ENCODE measurements at regions of chr18 and their contacts with region 1.

Region 1: DNA sequence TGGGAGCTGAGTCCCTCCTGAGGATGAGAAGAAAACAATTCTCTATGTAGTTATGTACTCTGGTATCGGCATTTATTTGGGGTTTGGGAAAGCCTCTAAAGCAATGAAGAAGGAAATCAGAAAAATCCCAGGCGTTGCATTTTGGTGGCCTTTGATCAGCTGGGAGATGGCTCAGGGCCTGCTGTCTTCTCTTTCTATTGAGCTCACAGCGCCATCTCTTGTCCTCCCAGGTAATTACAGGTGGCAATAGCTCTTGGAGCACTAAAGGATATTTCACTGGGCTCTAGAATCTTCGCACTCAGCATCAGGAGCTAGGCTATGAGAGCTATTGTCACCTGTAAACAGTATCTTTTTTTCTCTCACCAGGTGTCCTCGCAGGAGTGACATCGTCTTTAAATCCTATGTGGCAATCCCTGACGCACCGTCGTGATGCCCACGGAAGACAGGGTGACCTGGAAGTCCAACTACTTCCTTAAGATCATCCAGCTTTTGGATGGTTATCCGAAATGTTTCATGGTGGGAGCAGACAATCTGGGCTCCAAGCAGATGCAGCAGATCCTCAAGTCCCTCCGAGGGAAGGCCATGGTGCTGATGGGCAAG is 76.1 kb upstream of the PMAIP1 start:
- DNase-seq: peak; percentile 67
- H3K4me3 Mint-ChIP-seq: no peak overlapping the region
- H3K27ac Mint-ChIP-seq: no peak overlapping the region
- H3K4me1 Mint-ChIP-seq: no peaks in the 10 kb centered on the region
- H3K27me3 Mint-ChIP-seq: peaks cover 17% of the 10 kb centered on the region

Region 2: GRCh38 chr18:59459369-59460079 is 364.2 kb before region 1 on chr18:
- CTCF ChIA-PET with region 1: interaction called, 58 read pairs
- DNase-seq: no peak
- H3K4me3 Mint-ChIP-seq: no peak overlapping the region
- H3K27ac Mint-ChIP-seq: no peak overlapping the region
- H3K4me1 Mint-ChIP-seq: no peaks in the 10 kb centered on the region
- H3K27me3 Mint-ChIP-seq: peaks cover 4% of the 10 kb centered on the region

Region 3: GRCh38 chr18:59631583-59632181 is 192.0 kb before region 1 on chr18:
- CTCF ChIA-PET with region 1: interaction called, 13 read pairs
- DNase-seq: no peak
- H3K4me3 Mint-ChIP-seq: no peak overlapping the region
- H3K27ac Mint-ChIP-seq: no peak overlapping the region
- H3K4me1 Mint-ChIP-seq: no peaks in the 10 kb centered on the region
- H3K27me3 Mint-ChIP-seq: no peaks in the 10 kb centered on the region

Region 4: GRCh38 chr18:59697236-59697932 is 126.3 kb before region 1 on chr18 and contains the start of gene CCBE1:
- CTCF ChIA-PET with region 1: interaction called, 22 read pairs
- DNase-seq: peak; percentile 53
- H3K4me3 Mint-ChIP-seq: no peak within 1 kb of the TSS
- H3K27ac Mint-ChIP-seq: no peak within 1 kb of the TSS
- H3K4me1 Mint-ChIP-seq: peaks cover 7% of the 10 kb centered on the region
- H3K27me3 Mint-ChIP-seq: peaks cover 48% of the 10 kb centered on the region

Region 5: GRCh38 chr18:59783138-59783537 is 40.6 kb before region 1 on chr18:
- CTCF ChIA-PET with region 1: interaction called, 38 read pairs
- DNase-seq: peak; percentile 24
- H3K4me3 Mint-ChIP-seq: no peak overlapping the region
- H3K27ac Mint-ChIP-seq: no peak overlapping the region
- H3K4me1 Mint-ChIP-seq: no peaks in the 10 kb centered on the region
- H3K27me3 Mint-ChIP-seq: peaks cover 13% of the 10 kb centered on the region

Region 6: DNA sequence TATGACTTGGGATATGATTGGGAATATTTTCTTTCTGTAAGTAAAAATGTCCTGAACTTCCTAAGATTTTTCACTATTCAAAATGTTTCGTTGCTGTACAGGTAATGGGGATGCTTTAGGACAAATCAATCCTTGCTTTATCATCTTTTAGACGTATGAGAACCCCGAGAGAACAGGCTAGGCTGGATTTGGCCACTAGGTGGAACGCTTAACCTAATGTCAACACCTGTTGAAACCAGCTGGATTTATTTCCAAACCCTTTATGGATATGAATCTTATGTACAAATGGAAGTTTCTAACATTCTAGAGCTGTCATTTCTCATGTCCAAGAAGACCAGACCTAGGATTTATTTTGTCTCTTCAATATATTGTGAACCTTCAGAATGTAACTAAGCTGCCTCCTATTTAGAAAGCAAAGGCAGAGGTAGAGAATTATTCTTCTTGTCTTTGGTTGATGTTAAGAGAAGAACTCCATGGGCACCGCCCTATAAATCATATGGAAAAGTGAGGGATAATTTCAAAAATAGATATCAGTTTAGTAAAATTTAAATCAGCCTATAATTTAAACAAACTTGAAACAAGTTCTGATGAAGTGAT is 172.8 kb after region 1 on chr18:
- CTCF ChIA-PET with region 1: interaction called, 15 read pairs
- DNase-seq: no peak
- H3K4me3 Mint-ChIP-seq: no peak overlapping the region
- H3K27ac Mint-ChIP-seq: no peak overlapping the region
- H3K4me1 Mint-ChIP-seq: no peaks in the 10 kb centered on the region
- H3K27me3 Mint-ChIP-seq: peaks cover 17% of the 10 kb centered on the region